Kidney (tissue), 22 donors: ENCODE measurements at regions of chr3 and their contacts with region 1.

Region 1: DNA sequence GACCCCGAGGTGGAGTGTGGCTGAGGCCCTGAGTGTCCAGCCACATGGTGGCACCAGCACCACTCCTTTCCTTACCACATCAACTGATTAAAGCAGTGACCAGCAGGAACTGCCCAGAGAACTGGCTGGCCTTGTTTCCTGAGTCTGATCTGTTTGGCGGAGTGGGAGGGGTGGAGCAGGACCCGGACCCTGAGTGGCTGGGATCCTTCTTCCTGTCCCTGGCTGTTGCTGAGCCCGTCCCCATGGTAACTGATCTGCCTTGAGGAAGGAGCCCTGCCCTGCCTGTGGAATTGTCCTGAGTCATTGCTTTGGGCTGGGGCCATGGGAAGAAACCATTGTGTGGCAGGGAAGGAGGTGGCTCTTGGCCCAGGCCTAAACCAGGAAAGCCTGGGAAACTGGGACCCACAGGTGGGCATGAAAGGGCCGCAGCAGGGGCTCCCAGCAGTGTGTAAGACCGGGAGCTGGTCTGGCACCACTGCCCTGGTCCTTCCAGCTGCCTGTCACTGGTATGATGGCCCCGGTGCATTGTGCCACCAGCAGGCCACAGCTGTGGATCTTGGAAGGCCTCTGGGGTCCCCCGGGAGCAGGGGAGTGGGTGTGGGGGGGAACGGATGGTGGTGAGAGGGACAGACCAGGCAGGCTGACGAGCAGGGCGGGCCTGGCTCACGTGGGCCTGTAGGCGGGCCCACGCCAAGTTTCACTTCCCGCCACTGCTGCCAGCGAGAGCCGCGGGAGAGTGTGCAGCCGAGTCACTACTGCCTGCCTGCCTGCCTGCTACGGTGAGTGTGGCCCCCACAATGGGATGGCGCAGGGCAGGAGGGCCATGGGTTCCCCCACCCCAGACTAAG is 19.2 kb downstream of the ATRIP start:
- DNase-seq: peak; percentile 98 to 100 (median 99)
- H3K4me3 ChIP-seq: peak overlapping the region; percentile 45 to 84 (median 80)
- H3K27ac ChIP-seq: peak overlapping the region; percentile 99 to 100
- H3K4me1 ChIP-seq: peaks cover 0 to 43% (median 23%) of the 10 kb centered on the region in 3 donors
- H3K27me3 ChIP-seq: no peaks in the 10 kb centered on the region
- CTCF ChIP-seq: peak; percentile 92

Region 2: GRCh38 chr3:48247401-48247811 is 218.3 kb before region 1 on chr3:
- intact Hi-C with region 1: no loop called
- DNase-seq: no peak
- H3K4me3 ChIP-seq: no peak overlapping the region
- H3K27ac ChIP-seq: no peak overlapping the region
- H3K4me1 ChIP-seq: no peaks in the 10 kb centered on the region
- H3K27me3 ChIP-seq: no peaks in the 10 kb centered on the region
- CTCF ChIP-seq: no peak

Region 3: GRCh38 chr3:48504051-48504946 is 38.5 kb after region 1 on chr3 and contains the start of gene SHISA5:
- intact Hi-C with region 1: loop called (anchors 5 kb)
- DNase-seq: peak; percentile 65 to 95 (median 82)
- H3K4me3 ChIP-seq: peak within 1 kb of the TSS; percentile 50 to 77 (median 77)
- H3K27ac ChIP-seq: peak within 1 kb of the TSS; percentile 82 to 92
- H3K4me1 ChIP-seq: peaks cover 0 to 15% (median 0%) of the 10 kb centered on the region in 3 donors
- H3K27me3 ChIP-seq: no peaks in the 10 kb centered on the region
- CTCF ChIP-seq: no peak
- total RNA-seq, gene SHISA5: 214 TPM

Region 4: GRCh38 chr3:48548729-48549705 is 83.3 kb after region 1 on chr3:
- intact Hi-C with region 1: loop called (anchors 5 kb)
- DNase-seq: peak; percentile 81 to 92 (median 88)
- H3K4me3 ChIP-seq: no peak overlapping the region
- H3K27ac ChIP-seq: no peak overlapping the region
- H3K4me1 ChIP-seq: peaks cover 0 to 3% (median 0%) of the 10 kb centered on the region in 3 donors
- H3K27me3 ChIP-seq: no peaks in the 10 kb centered on the region
- CTCF ChIP-seq: peak; percentile 95